ENCODE measurements at regions of chr4 and their contacts with region 1.

Region 1: GRCh38 chr4:44726262-44726871 is at the start of gene GNPDA2:
- DNase-seq: peak; percentile 66 to 86
- ATAC-seq: peak; percentile 96 to 98
- H3K4me3 ChIP-seq: peak within 1 kb of the TSS; percentile 79
- H3K27ac ChIP-seq: peak within 1 kb of the TSS; percentile 80 to 94
- H3K4me1 ChIP-seq: 0 out of 3 replicates have a peak, but pooled peaks cover 6% of the 10 kb centered on the region
- CTCF ChIP-seq: no peak
- EP300 ChIP-seq: no peak
- POLR2A ChIP-seq: peak; percentile 83
- RAD21 ChIP-seq: no peak
- polyA plus RNA-seq, gene GNPDA2: 15.9 and 19.7 TPM in 2 replicates

Region 2: DNA sequence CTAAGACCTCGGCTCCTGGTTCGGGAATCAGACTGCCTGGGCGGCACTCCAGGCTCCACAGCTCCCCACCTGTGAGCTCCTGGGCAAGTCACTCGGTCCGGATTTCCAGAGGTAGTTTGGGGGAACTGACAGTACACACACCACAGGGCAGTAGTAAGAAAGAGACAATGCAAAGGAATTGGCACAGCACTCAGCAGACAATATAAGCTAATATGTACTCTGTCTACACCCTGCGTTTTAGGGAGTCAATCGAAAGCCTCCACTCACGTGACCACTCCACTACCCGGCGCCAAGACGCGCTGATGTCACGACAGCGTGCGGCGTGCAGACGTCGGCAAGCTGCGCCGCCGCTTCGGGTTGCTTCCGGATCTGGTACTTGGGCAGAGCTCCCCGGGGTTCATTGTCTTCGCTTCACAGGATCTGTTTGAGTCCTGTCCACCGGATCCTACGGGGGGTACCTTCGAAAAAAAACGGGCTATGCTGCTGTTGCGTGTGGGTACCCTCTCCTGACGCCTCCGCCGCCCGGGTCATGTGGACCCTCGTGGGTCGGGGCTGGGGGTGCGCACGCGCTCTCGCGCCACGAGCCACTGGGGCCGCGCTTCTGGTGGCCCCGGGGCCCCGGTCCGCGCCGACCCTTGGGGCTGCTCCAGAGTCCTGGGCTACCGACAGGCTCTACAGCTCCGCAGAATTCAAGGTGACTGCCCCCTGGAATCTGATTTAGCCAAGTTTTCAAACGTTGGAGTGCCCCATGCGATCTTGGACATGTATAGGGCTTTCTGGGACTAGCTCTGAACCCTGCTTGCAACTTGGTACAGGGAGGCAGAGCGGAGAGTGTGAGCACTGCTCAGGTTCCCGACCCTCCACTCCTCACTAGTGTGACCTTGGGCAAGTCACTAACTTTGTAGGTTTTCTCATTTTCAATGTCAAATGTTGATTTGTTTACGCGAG is 48.0 kb before region 1 on chr4 and contains the start of gene GUF1:
- CTCF ChIA-PET with region 1: no interaction called
- POLR2A ChIA-PET with region 1: interaction called, 16 read pairs
- DNase-seq: peak; percentile 38 to 88
- ATAC-seq: peak; percentile 95 to 96
- H3K4me3 ChIP-seq: peak within 1 kb of the TSS; percentile 61
- H3K27ac ChIP-seq: peak within 1 kb of the TSS; percentile 92 to 95
- H3K4me1 ChIP-seq: peaks cover 15% of the 10 kb centered on the region
- CTCF ChIP-seq: no peak
- EP300 ChIP-seq: no peak
- POLR2A ChIP-seq: peak; percentile 61
- RAD21 ChIP-seq: no peak
- polyA plus RNA-seq, gene GUF1: 15.5 and 23.5 TPM in 2 replicates

Region 3: DNA sequence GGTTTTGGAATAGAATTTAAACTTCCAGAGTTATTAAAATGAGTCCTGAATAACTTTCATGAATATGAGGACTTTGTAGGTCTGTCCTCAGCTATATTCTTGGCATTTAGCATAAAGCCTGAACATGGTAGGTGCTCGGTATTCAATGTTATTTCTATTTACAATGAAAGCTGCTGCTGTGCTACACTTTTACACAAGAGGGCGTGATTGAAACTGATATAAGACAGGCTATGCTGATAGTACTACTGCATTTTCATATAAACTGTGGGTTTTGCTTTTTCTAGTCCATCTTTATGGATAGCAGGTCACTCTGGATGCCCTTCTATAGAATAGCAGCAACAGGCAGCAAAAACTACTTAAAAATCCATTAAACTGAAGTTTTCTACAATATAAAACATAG is 12.2 kb after region 1 on chr4:
- CTCF ChIA-PET with region 1: no interaction called
- POLR2A ChIA-PET with region 1: no interaction called
- DNase-seq: peak in 1 of 2 experiments; percentile 4
- ATAC-seq: 0 out of 6 replicates have a peak, but pooled peaks of 1 of the 2 experiments have one; percentile 45
- H3K4me3 ChIP-seq: no peak overlapping the region
- H3K27ac ChIP-seq: no peak overlapping the region
- H3K4me1 ChIP-seq: no peaks in the 10 kb centered on the region
- CTCF ChIP-seq: no peak
- EP300 ChIP-seq: no peak
- POLR2A ChIP-seq: no peak
- RAD21 ChIP-seq: no peak

Measured in A549 (cell line).